HepG2 (cell line): ENCODE measurements at regions of chr6 and their contacts with region 1.

Region 1: DNA sequence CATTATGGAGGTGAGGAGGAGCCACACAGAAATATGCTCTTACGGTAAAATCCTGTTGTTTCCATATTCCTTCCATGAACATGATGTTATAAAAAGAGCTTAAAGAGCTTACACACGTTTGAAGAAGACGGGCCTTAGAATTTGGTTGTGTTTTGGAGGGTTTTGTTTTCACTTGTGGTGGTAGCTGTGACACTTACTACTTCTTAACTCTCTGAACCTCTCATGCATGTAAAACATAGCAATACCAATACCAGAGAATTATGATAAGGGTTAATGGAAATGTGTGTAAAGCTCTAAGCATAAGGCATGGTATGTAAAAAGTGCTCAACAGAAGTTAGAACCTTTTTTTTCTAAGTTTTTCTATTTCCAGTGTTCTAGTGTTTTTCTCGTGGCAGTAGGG is 256.1 kb upstream of the KCNQ5 start:
- DNase-seq: no peak
- ATAC-seq: no peak
- H3K4me3 ChIP-seq: no peak overlapping the region
- H3K27ac ChIP-seq: no peak overlapping the region
- H3K4me1 ChIP-seq: no peaks in the 10 kb centered on the region
- H3K27me3 ChIP-seq: no peaks in the 10 kb centered on the region
- CTCF ChIP-seq: no peak
- EP300 ChIP-seq: no peak
- POLR2A ChIP-seq: no peak
- RAD21 ChIP-seq: no peak

Region 2: DNA sequence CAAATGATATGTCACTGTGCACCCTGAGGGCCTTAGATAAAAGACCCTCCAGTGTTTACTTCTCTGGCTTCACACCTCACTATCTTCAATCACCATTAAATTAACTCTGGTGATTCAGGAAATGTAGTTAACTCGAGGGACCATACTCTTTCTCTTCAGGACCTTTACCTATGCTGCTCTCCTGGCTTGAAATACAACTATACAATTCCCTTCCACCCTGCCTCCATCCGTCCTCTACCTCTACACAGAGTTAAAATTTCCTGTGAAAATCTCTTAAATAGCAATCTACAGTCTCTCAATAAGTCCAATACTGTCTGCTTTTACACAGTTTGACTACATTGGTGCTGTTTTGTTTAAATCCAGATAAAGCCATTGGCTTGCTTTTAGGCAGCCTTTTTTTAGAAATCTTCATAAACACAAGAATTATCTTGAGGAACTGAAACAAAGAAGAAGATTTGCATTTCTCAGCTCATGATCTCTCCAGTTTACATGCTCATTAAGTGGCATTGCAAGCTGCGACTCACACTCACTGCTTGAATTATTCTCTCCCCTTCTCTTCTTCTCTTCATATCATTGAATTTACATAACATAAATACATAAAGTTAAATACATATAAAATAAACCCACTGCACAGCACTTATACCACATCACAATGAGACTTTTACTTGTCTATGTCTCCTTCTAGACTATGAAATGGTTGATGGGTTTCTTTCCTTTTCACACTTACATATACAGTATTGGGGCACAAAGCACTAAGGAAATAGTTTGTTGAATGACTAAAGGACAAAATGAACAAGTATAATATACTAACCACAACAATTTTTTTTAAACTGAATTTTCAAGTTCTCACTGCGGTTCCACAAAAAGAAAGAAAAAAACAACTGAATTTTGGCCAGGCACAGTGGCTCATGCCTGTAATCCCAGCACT is 17.1 kb after region 1 on chr6:
- CTCF ChIA-PET with region 1: no interaction called
- POLR2A ChIA-PET with region 1: no interaction called
- in situ Hi-C with region 1: no loop called
- intact Hi-C with region 1: no loop called
- DNase-seq: no peak
- ATAC-seq: no peak
- H3K4me3 ChIP-seq: no peak overlapping the region
- H3K27ac ChIP-seq: no peak overlapping the region
- H3K4me1 ChIP-seq: no peaks in the 10 kb centered on the region
- H3K27me3 ChIP-seq: no peaks in the 10 kb centered on the region
- CTCF ChIP-seq: no peak
- EP300 ChIP-seq: no peak
- POLR2A ChIP-seq: no peak
- RAD21 ChIP-seq: no peak

Region 3: GRCh38 chr6:72984981-72985665 is 619.4 kb after region 1 on chr6:
- CTCF ChIA-PET with region 1: no interaction called
- POLR2A ChIA-PET with region 1: no interaction called
- in situ Hi-C with region 1: no loop called
- intact Hi-C with region 1: loop called (anchors 5 kb)
- DNase-seq: no peak
- ATAC-seq: peak; percentile 27; the same call in 2 of the 3 replicates
- H3K4me3 ChIP-seq: no peak overlapping the region
- H3K27ac ChIP-seq: no peak overlapping the region
- H3K4me1 ChIP-seq: peaks cover 16% of the 10 kb centered on the region; the same call in 1 of the 2 replicates
- H3K27me3 ChIP-seq: no peaks in the 10 kb centered on the region
- CTCF ChIP-seq: no peak
- EP300 ChIP-seq: no peak
- POLR2A ChIP-seq: no peak
- RAD21 ChIP-seq: no peak